ENCODE measurements at regions of chr7 and their contacts with region 1.

Region 1: GRCh38 chr7:68823996-68824780 is 774.1 kb upstream of the AUTS2 start:
- DNase-seq: no peak
- H3K4me3 ChIP-seq: no peak overlapping the region
- H3K27ac ChIP-seq: no peak overlapping the region
- H3K4me1 ChIP-seq: no peaks in the 10 kb centered on the region
- H3K27me3 ChIP-seq: no peaks in the 10 kb centered on the region
- CTCF ChIP-seq: no peak

Region 2: GRCh38 chr7:68770636-68771035 is 53.6 kb before region 1 on chr7:
- CTCF ChIA-PET with region 1: no interaction called
- dilution Hi-C with region 1: loop called (anchors 5 kb)
- in situ Hi-C with region 1: no loop called
- intact Hi-C with region 1: no loop called
- DNase-seq: no peak
- H3K4me3 ChIP-seq: no peak overlapping the region
- H3K27ac ChIP-seq: no peak overlapping the region
- H3K4me1 ChIP-seq: no peaks in the 10 kb centered on the region
- H3K27me3 ChIP-seq: no peaks in the 10 kb centered on the region
- CTCF ChIP-seq: no peak